GM18951 (cell line): ENCODE measurements at regions of chr6 and their contacts with region 1.

Region 1: DNA sequence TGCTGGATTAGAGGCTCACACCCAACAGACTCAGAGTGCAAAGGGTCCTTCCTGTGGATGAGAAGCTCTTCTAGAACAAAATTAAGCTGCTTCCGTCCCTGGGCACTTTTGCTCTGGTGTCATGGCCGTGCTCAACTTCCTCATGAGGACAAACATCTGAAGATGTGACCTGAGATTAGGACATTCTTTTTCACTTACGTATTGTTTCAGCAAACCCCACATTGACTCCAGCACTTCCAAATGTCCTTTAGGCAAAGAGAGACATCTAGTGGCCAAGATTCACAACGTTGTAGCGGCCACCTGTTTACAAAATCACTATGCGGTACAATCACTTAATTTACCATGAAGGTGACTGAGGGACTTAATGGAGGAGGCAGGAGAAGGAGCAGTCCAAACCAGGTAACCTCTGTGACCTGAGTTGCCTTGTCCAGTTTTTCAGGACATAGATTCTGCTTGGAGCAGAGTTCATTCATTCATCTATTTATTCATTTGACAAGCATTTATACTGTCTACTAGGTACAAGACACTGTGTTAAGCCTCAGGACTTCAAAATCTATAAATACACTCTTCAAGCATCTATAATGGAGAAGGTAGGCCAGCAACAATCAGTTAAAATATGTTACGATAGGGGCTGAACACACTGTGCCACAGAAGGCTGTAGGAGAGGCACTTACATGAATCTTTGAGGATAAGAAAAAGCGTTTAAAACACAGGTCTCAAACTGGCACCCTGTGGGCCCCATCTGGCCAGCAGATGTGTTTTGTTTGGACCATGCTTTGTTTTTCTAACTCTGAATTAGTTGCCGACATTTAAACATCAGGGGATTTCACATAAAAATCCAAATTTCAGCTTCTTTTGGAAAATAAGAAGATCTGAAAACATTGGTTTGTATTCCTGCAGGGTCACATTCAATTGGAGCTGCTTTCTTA is 5.6 kb upstream of the ADGRF1 start:
- POLR2A ChIP-seq: no peak

Region 2: GRCh38 chr6:46848684-46849360 is 198.9 kb before region 1 on chr6:
- in situ Hi-C with region 1: loop called (anchors 25 kb)
- POLR2A ChIP-seq: no peak

Region 3: GRCh38 chr6:47203266-47203937 is 155.7 kb after region 1 on chr6:
- in situ Hi-C with region 1: no loop called
- POLR2A ChIP-seq: no peak

Region 4: DNA sequence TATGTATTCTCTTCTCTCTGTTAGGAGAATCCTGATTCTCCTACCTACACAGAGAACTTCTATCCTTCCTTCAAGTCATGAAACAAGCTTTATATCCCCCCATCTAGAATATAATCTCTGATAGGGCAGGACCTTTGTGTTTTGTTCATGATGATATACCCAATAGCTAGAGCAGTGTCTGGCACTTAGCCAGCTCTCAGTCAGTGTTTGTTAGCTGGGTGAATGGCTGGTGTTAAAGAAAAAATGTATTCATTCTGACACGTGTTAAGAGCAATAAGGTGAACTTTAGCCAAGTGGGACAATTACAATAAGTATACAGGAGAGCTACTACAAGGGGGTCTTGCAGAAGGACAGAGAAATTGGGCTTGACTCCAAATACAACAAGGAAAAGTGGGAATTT is 296.3 kb after region 1 on chr6:
- in situ Hi-C with region 1: no loop called
- POLR2A ChIP-seq: no peak